Adrenal gland (tissue), 19 donors: ENCODE measurements at regions of chr5 and their contacts with region 1.

Region 1: DNA sequence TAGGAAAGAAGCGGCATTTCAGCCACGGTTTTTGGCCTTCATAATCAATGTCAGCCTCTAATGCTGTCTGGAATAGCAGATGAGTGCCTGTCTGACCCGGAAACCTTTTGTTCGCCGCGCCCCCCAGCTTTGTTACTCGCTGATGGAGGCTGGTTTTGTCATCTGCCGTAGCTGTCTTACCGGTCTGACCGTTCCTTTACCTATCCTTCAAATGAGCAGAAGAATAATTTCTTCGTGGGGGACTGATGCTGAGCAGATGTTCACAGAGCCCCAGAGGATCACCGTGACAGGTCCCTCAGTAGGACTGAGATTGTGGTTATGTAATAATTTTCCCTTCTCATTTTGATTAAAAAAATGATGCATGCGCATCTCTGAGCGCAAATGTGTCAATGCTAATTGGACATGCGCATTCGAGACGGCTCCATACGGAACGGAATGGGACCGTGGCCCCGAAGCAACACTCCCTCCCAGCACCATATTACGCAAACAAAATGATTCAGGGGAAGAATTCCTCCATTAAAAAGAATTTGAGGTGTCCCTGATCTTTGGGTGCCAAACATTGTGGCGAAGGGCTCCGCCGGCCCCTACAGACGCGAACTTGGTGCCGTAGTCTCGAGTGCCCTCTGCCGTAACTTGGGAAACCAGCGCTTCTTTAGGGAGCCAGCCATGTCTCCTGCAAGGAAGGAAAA is 27.6 kb downstream of the TLX3 start:
- DNase-seq: peak in 6 of 7 donors; percentile 26 to 60 (median 44)
- H3K4me3 ChIP-seq: peak overlapping the region in 1 of 4 donors; percentile 54
- H3K27ac ChIP-seq: no peak overlapping the region
- H3K4me1 ChIP-seq: peaks cover 0 to 4% of the 10 kb centered on the region in 2 donors
- H3K27me3 ChIP-seq: peaks cover 19% of the 10 kb centered on the region
- CTCF ChIP-seq: peak; percentile 13 to 58 (median 48)
- POLR2A ChIP-seq: no peak

Region 2: DNA sequence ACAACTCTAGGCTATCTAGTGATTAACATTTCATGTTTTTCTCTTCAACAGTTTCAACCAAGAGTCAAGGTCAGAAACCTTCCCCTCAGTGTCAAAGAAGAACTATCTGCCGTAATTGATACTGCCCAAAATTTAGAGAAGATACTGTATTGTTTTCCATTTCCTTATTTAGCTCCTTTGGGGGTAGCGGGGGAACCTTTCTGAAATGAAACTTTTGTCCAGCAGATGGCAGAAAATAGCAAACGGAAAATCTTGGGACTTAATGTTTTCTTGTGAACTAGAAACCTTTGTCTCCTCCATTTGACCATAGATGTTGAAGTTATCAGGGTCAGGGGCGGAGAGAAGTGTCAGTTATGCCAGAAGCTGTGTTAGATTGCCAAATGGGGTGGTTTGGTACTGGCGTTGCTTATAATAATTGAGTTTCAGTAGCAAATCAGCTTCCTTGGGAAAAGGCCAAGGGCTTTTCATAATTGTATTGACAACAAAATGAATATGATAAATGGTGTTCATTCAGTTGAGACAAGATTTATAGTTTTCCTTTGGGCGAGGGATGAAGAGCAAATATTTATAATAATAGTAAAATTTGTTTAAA is 129.3 kb before region 1 on chr5:
- intact Hi-C with region 1: loop called in 1 of 2 experiments (anchors 10 kb)
- DNase-seq: peak in 2 of 7 donors; percentile 9 to 19
- H3K4me3 ChIP-seq: no peak overlapping the region
- H3K27ac ChIP-seq: no peak overlapping the region
- H3K4me1 ChIP-seq: no peaks in the 10 kb centered on the region
- H3K27me3 ChIP-seq: no peaks in the 10 kb centered on the region
- CTCF ChIP-seq: peak; percentile 22 to 54 (median 50)
- POLR2A ChIP-seq: no peak